Common myeloid progenitor, CD34-positive (primary cell): ENCODE measurements at regions of chr12 and their contacts with region 1.

Region 1: GRCh38 chr12:110600254-110600653 is 13.7 kb upstream of the TCTN1 start:
- DNase-seq: peak; percentile 70 to 81 (median 74)
- H3K4me3 ChIP-seq: no peak overlapping the region
- H3K27ac ChIP-seq: no peak overlapping the region
- H3K4me1 ChIP-seq: peaks cover 2 to 13% (median 11%) of the 10 kb centered on the region in 4 experiments
- H3K27me3 ChIP-seq: no peaks in the 10 kb centered on the region

Region 2: GRCh38 chr12:110266980-110267620 is 333.2 kb before region 1 on chr12:
- CTCF ChIA-PET with region 1: no interaction called
- POLR2A ChIA-PET with region 1: no interaction called
- DNase-seq: peak in 2 of 3 donors; percentile 35 to 53
- H3K4me3 ChIP-seq: peak overlapping the region in 2 of 7 experiments; percentile 23 to 61
- H3K27ac ChIP-seq: no peak overlapping the region
- H3K4me1 ChIP-seq: peaks cover 0 to 15% (median 5%) of the 10 kb centered on the region in 4 experiments
- H3K27me3 ChIP-seq: no peaks in the 10 kb centered on the region

Region 3: DNA sequence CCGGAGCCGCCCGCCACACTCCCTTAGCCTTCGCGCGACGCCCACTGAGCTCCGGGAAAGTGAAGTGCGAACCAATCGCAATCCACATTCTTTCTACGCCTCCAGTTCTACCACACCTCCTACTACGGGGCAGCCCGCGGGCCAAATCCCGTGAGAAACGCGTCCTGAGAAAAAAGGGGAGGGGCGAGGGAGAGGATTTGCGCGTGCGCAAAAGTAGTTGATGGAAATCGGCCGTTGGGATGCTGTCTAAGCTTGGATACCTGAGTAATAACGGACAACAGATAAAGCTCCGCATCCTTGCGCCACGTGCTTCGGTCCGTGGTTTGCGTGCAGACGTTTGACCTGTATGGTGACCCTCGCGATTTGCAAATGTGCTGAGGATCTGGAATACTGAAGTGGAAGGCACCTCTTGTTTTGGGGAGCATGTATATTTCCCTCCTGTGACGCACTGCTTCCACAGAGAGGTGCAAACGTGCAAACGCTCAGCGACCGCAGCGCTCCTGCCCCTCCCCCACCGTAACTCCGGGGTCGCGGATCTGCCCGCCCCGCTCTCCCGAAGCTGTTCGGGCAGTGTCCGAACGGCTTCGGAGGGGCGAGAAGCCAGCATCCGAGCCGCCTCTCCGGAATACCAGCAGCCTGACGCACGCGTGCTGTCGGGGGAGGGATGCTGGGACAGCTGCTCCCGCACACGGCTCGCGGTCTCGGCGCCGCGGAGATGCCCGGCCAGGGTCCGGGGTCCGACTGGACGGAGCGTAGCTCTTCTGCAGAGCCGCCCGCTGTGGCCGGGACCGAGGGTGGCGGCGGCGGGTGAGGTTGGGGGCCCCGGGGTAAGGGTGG is 131.8 kb before region 1 on chr12 and contains the starts of genes FAM216A and GPN3:
- CTCF ChIA-PET with region 1: interaction called, 33 read pairs
- POLR2A ChIA-PET with region 1: no interaction called
- DNase-seq: peak; percentile 98 to 99 (median 98)
- H3K4me3 ChIP-seq: peak within 1 kb of the TSS; percentile 74 to 97 (median 90)
- H3K27ac ChIP-seq: peak within 1 kb of the TSS; percentile 87 to 93
- H3K4me1 ChIP-seq: peaks cover 5 to 36% (median 25%) of the 10 kb centered on the region in 4 experiments
- H3K27me3 ChIP-seq: no peaks in the 10 kb centered on the region

Region 4: DNA sequence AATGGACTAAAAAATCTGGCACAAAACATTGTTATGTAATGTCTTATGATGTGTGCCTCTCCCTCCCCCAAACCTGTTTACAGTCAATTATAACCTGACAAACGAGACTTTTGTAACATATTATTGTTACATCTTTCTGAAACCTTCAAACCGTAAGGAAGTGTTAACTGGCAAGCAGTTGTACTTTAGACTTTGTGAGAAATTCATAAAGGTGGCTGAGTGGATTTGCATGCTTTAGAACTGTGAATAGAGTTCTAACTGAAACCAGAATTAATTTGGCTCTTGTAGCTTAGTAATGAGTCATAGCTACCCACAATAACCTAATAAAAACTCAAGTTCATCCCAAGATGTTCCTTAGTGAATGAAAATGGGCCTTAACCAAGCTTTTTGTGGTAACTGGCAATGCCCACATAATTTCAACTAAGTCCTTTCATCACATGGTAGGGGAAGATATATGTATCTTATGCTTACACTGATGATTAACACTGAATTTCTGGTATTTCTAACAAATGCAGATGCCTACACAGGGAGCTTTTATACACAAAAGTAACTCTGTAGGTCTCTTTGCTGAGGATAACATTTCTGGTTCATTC is 68.4 kb before region 1 on chr12:
- CTCF ChIA-PET with region 1: interaction called, 50 read pairs
- POLR2A ChIA-PET with region 1: no interaction called
- DNase-seq: no peak
- H3K4me3 ChIP-seq: no peak overlapping the region
- H3K27ac ChIP-seq: no peak overlapping the region
- H3K4me1 ChIP-seq: no peaks in the 10 kb centered on the region
- H3K27me3 ChIP-seq: no peaks in the 10 kb centered on the region

Region 5: GRCh38 chr12:110555577-110556406 is 44.5 kb before region 1 on chr12:
- CTCF ChIA-PET with region 1: interaction called, 280 read pairs
- POLR2A ChIA-PET with region 1: interaction called, 4 read pairs
- DNase-seq: no peak
- H3K4me3 ChIP-seq: no peak overlapping the region
- H3K27ac ChIP-seq: no peak overlapping the region
- H3K4me1 ChIP-seq: peaks cover 0 to 16% (median 8%) of the 10 kb centered on the region in 4 experiments
- H3K27me3 ChIP-seq: no peaks in the 10 kb centered on the region

Region 6: GRCh38 chr12:110583137-110584059 is 16.9 kb before region 1 on chr12 and contains the start of gene PPTC7:
- CTCF ChIA-PET with region 1: interaction called, 78 read pairs
- POLR2A ChIA-PET with region 1: interaction called, 3 read pairs
- DNase-seq: peak; percentile 95 to 97 (median 96)
- H3K4me3 ChIP-seq: peak within 1 kb of the TSS; percentile 90 to 99 (median 95)
- H3K27ac ChIP-seq: peak within 1 kb of the TSS; percentile 83 to 86
- H3K4me1 ChIP-seq: peaks cover 31 to 58% (median 52%) of the 10 kb centered on the region in 4 experiments
- H3K27me3 ChIP-seq: no peaks in the 10 kb centered on the region

Region 7: DNA sequence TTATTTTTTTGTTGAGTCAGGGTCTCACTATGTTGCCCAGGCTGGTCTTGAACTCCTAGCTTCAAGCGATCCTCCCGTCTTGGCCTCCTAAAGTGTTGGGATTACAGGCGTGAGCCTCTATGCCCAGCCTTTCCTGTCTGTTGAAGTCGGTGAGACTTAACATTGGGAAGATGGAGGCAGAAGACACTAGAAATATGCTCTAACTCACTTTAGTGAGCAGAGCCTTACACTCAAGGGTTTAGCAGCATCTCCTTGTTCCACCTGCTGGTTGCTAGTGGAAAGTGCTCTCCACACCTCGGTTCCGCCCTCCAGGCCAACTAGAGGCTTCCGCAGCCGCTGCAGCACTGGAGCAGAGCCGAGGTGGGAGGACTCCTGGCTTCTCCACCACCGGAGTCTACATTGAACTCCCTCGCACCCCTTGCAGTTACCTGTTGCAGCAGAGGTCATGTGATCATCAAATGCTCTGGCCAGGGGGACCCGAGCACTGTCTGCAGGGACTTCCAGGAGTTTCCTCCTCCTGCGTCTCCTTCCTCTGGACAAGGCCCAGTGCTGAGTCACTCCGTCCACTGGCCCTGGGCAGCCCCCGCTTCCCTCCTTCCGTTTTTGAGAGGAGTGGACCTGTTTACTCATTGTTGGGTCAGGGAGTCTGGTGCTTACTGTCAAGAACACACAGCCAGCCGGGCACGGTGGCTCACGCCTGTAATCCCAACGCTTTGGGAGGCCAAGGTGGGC is 98.1 kb after region 1 on chr12:
- CTCF ChIA-PET with region 1: interaction called, 10 read pairs
- POLR2A ChIA-PET with region 1: no interaction called
- DNase-seq: peak; percentile 87 to 94 (median 92)
- H3K4me3 ChIP-seq: peak overlapping the region in 1 of 7 experiments; percentile 57
- H3K27ac ChIP-seq: no peak overlapping the region
- H3K4me1 ChIP-seq: peaks cover 3 to 28% (median 17%) of the 10 kb centered on the region in 4 experiments
- H3K27me3 ChIP-seq: no peaks in the 10 kb centered on the region

Region 8: GRCh38 chr12:111211910-111212757 is 611.9 kb after region 1 on chr12:
- CTCF ChIA-PET with region 1: no interaction called
- POLR2A ChIA-PET with region 1: no interaction called
- DNase-seq: peak; percentile 12 to 63 (median 51)
- H3K4me3 ChIP-seq: no peak overlapping the region
- H3K27ac ChIP-seq: no peak overlapping the region
- H3K4me1 ChIP-seq: no peaks in the 10 kb centered on the region
- H3K27me3 ChIP-seq: peaks cover 0 to 23% (median 5%) of the 10 kb centered on the region in 5 experiments